PC-3 (cell line): ENCODE measurements at regions of chr1 and their contacts with region 1.

Region 1: GRCh38 chr1:223712194-223712849 is at the start of gene CAPN2:
- DNase-seq: peak; percentile 96
- ATAC-seq: peak; percentile 48
- H3K4me3 ChIP-seq: peak within 1 kb of the TSS; percentile 92
- H3K27ac ChIP-seq: peak within 1 kb of the TSS; percentile 92
- H3K4me1 ChIP-seq: peaks cover 82% of the 10 kb centered on the region
- H3K27me3 ChIP-seq: no peaks in the 10 kb centered on the region
- CTCF ChIP-seq: peak; percentile 68
- total RNA-seq, gene CAPN2: 1,259 and 1,457 TPM in 2 replicates

Region 2: GRCh38 chr1:223628233-223629125 is 83.8 kb before region 1 on chr1:
- CTCF ChIA-PET with region 1: no interaction called
- POLR2A ChIA-PET with region 1: no interaction called
- intact Hi-C with region 1: no loop called
- DNase-seq: peak; percentile 37
- ATAC-seq: peak; percentile 19; the same call in 1 of the 2 replicates
- H3K4me3 ChIP-seq: no peak overlapping the region
- H3K27ac ChIP-seq: no peak overlapping the region
- H3K4me1 ChIP-seq: peaks cover 13% of the 10 kb centered on the region
- H3K27me3 ChIP-seq: no peaks in the 10 kb centered on the region
- CTCF ChIP-seq: peak; percentile 84

Region 3: DNA sequence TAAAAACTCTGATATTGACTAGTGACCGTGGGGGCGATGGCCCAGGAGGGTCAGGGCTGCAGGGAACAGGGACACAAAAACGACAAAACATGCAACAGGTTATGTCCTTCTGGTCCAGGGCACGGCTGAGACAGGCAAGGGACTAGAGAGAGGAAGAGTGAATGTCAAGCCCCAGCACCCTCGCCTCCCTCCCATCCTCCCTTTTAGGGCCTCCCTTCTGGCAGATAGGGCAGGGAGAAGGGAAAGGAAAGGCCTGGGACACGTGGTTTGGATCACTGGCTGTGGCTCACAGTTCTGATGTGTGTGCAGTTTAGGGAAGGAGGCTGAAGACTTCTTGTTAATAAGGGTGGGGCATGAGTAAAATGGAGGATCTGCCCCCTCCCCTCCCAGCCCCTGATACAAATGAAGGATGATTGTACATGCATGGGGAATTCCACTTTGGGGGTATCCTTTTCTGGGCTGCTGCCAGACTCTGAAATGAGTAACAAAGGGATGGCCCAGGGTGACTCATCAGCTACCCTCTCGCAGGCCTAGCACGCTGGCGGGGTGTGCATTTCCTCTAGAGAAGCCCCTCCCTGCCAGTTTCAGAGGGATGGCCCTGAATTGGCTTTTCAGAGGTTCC is 14.2 kb after region 1 on chr1:
- CTCF ChIA-PET with region 1: no interaction called
- POLR2A ChIA-PET with region 1: interaction called, 5 read pairs
- intact Hi-C with region 1: loop called (anchors 1 kb)
- DNase-seq: peak; percentile 97
- ATAC-seq: peak; percentile 68
- H3K4me3 ChIP-seq: peak overlapping the region; percentile 18; the same call in 1 of the 2 replicates
- H3K27ac ChIP-seq: peak overlapping the region; percentile 88
- H3K4me1 ChIP-seq: peaks cover 82% of the 10 kb centered on the region
- H3K27me3 ChIP-seq: no peaks in the 10 kb centered on the region
- CTCF ChIP-seq: no peak

Region 4: GRCh38 chr1:223748773-223749733 is 36.7 kb after region 1 on chr1:
- CTCF ChIA-PET with region 1: interaction called, 3 read pairs
- POLR2A ChIA-PET with region 1: no interaction called
- intact Hi-C with region 1: loop called (anchors 1 kb)
- DNase-seq: peak; percentile 56
- ATAC-seq: peak; percentile 25
- H3K4me3 ChIP-seq: no peak overlapping the region
- H3K27ac ChIP-seq: peak overlapping the region; percentile 69
- H3K4me1 ChIP-seq: peaks cover 22% of the 10 kb centered on the region
- H3K27me3 ChIP-seq: no peaks in the 10 kb centered on the region
- CTCF ChIP-seq: peak; percentile 95

Region 5: GRCh38 chr1:223845810-223846682 is 133.7 kb after region 1 on chr1 and contains the start of gene TP53BP2:
- CTCF ChIA-PET with region 1: no interaction called
- POLR2A ChIA-PET with region 1: interaction called, 3 read pairs
- intact Hi-C with region 1: loop called (anchors 5 kb)
- DNase-seq: peak; percentile 96
- ATAC-seq: peak; percentile 86
- H3K4me3 ChIP-seq: peak within 1 kb of the TSS; percentile 79
- H3K27ac ChIP-seq: peak within 1 kb of the TSS; percentile 89
- H3K4me1 ChIP-seq: peaks cover 27% of the 10 kb centered on the region
- H3K27me3 ChIP-seq: no peaks in the 10 kb centered on the region
- CTCF ChIP-seq: peak; percentile 71
- total RNA-seq, gene TP53BP2: 24.6 and 32.0 TPM in 2 replicates

Region 6: DNA sequence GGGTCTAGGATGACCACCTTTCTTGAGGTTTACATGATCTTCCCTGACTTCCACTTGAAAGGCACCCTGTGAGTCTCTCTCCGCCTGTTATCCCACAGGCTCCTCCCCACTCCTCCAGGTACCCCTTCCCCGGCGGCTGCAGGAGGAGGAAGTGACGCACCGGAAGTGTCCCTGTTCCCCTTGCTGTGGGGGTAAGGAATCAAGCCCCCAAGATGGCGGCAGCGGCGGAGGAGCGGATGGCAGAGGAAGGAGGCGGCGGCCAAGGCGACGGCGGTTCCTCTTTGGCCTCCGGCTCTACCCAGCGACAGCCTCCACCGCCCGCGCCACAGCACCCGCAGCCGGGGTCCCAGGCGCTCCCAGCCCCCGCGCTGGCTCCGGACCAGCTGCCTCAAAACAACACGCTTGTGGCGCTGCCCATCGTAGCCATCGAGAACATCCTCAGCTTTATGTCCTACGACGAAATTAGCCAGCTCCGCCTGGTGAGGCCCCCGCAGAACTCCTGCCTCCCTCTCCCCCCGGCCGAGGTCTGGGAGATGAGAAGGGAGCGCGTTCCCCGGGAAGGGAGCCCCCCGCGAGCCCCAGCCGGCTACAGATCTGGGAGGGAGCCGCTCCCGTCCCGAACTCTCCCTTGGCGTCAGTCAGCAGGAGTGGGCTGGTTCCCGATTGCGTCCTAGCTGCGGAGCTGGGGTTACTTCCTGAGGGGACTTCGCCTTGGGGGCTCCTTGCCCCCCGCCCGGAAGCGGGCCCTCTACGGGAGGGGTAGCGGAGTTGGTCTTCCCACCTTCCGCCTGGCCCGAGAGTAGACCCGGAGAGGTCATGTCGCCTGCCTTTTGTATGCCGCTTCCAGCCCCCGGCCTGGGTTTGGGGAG is 401.8 kb after region 1 on chr1 and contains the start of gene FBXO28:
- CTCF ChIA-PET with region 1: no interaction called
- POLR2A ChIA-PET with region 1: no interaction called
- intact Hi-C with region 1: loop called (anchors 10 kb)
- DNase-seq: peak; percentile 98
- ATAC-seq: peak; percentile 94
- H3K4me3 ChIP-seq: peak within 1 kb of the TSS; percentile 91
- H3K27ac ChIP-seq: peak within 1 kb of the TSS; percentile 48
- H3K4me1 ChIP-seq: peaks cover 26% of the 10 kb centered on the region
- H3K27me3 ChIP-seq: no peaks in the 10 kb centered on the region
- CTCF ChIP-seq: no peak
- total RNA-seq, gene FBXO28: 57.7 and 82.6 TPM in 2 replicates